ENCODE measurements at regions of chr10 and their contacts with region 1.

Region 1: GRCh38 chr10:61896854-61897661 is 4.4 kb upstream of the ARID5B start:
- DNase-seq: peak in 12 of 14 experiments; percentile 16 to 89 (median 36)
- ATAC-seq: peak; percentile 53
- H3K4me3 ChIP-seq: peak overlapping the region; percentile 48
- H3K4me3 Mint-ChIP-seq: peak overlapping the region; percentile 85
- H3K27ac ChIP-seq: no peak overlapping the region
- H3K27ac Mint-ChIP-seq: peak overlapping the region; percentile 72
- H3K4me1 ChIP-seq: peaks cover 19% of the 10 kb centered on the region
- H3K4me1 Mint-ChIP-seq: peaks cover 33% of the 10 kb centered on the region
- H3K27me3 ChIP-seq: no peaks in the 10 kb centered on the region
- H3K27me3 Mint-ChIP-seq: no peaks in the 10 kb centered on the region
- CTCF ChIP-seq: peak; percentile 75

Region 2: DNA sequence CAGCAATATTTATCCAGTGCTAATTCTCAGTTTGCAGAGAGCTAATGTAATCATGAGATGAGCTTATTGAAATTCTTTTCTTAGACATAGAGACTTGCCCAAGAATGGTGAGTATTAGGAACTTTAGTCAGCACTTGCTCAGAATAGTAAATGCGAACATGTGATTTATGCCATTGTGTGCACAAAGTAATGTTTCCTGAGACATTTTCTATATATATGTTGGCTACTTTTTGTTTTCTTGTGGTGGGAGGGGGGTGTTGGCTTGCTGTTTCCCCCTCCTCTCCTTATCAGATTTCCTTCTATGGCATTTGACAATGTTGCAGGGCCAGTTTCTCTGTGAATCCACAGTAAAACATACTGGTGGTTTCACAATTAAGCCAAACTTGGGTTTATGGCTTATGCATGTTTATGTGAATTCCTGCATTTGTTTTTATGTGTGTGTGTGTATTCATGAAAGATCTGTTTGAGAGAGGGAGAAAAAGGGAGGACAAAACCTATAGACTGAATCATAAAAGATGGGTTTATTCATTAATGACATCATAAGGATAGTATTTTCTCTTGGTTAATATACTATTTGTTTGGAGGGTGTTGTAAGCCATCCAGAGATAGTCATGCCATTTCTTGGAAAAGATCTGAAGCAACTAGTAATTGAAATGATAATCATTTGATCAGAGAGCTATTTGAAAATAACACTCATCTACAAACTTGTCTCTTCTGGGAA is 40.7 kb after region 1 on chr10:
- CTCF ChIA-PET with region 1: interaction called, 8 read pairs
- POLR2A ChIA-PET with region 1: interaction called, 28 read pairs
- intact Hi-C with region 1: no loop called
- DNase-seq: no peak
- ATAC-seq: no peak
- H3K4me3 ChIP-seq: no peak overlapping the region
- H3K4me3 Mint-ChIP-seq: no peak overlapping the region
- H3K27ac ChIP-seq: peak overlapping the region in 1 of 2 donors; percentile 46
- H3K27ac Mint-ChIP-seq: peak overlapping the region; percentile 82
- H3K4me1 ChIP-seq: peaks cover 40% of the 10 kb centered on the region
- H3K4me1 Mint-ChIP-seq: peaks cover 83% of the 10 kb centered on the region
- H3K27me3 ChIP-seq: no peaks in the 10 kb centered on the region
- H3K27me3 Mint-ChIP-seq: no peaks in the 10 kb centered on the region
- CTCF ChIP-seq: no peak

Region 3: DNA sequence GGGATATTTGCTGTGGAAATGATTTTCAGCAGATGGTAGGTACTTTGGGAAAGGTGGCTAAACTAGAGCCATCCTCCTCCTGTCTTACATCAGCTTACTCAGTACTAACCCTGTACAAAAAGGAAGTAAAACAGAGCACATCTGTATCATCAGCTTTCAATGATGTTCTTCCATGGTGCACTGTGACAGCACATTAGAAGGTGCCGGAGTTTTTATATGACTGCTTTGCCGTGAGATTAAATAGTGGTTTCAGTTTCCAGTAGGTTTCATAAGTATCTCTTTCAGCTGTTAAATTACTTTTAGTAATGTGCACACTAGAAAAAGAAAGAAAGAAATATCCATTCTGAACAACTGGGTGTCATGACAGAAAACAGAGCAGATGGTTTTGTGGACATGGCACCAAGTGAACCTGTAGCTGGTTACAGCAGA is 90.9 kb after region 1 on chr10:
- CTCF ChIA-PET with region 1: interaction called, 14 read pairs
- POLR2A ChIA-PET with region 1: interaction called, 51 read pairs
- intact Hi-C with region 1: loop called (anchors 1 to 5 kb)
- DNase-seq: peak in 3 of 14 experiments; percentile 61 to 70 (median 63)
- ATAC-seq: peak; percentile 59
- H3K4me3 ChIP-seq: peak overlapping the region; percentile 17
- H3K4me3 Mint-ChIP-seq: peak overlapping the region; percentile 18
- H3K27ac ChIP-seq: peak overlapping the region in 1 of 2 donors; percentile 47
- H3K27ac Mint-ChIP-seq: peak overlapping the region; percentile 78
- H3K4me1 ChIP-seq: peaks cover 24% of the 10 kb centered on the region
- H3K4me1 Mint-ChIP-seq: peaks cover 68% of the 10 kb centered on the region
- H3K27me3 ChIP-seq: no peaks in the 10 kb centered on the region
- H3K27me3 Mint-ChIP-seq: no peaks in the 10 kb centered on the region
- CTCF ChIP-seq: no peak

Region 4: DNA sequence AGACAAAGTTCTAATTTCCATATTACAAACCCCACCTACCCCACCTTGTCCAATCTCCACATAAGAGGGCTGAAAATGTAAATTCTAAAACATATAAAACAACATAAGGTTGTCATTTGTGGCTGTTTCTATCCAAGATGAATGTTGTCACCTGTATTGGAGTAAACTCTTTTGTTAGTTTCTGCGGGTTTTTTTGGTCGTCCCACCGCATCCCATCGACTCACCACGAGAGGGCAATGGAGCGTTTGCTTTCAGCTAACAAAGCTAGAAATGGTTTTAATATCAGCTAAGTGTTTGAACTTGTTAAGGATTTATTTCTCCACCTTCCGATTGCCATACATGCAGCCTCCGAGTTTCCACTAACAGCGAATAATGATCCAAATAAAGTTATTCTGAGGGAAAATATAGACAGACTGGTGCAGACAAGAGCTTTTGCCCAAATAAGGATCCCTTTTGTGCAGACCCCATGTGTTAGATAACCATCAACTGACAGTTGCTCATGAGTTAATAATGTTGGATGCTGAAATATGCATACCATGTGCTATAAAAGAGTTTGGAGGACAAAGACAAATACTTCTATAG is 141.6 kb after region 1 on chr10:
- CTCF ChIA-PET with region 1: interaction called, 20 read pairs
- POLR2A ChIA-PET with region 1: interaction called, 103 read pairs
- intact Hi-C with region 1: loop called (anchors 5 kb)
- DNase-seq: peak; percentile 65 to 88 (median 72)
- ATAC-seq: peak; percentile 84
- H3K4me3 ChIP-seq: peak overlapping the region; percentile 29
- H3K4me3 Mint-ChIP-seq: peak overlapping the region; percentile 72
- H3K27ac ChIP-seq: no peak overlapping the region
- H3K27ac Mint-ChIP-seq: peak overlapping the region; percentile 68
- H3K4me1 ChIP-seq: peaks cover 54% of the 10 kb centered on the region
- H3K4me1 Mint-ChIP-seq: peaks cover 87% of the 10 kb centered on the region
- H3K27me3 ChIP-seq: no peaks in the 10 kb centered on the region
- H3K27me3 Mint-ChIP-seq: no peaks in the 10 kb centered on the region
- CTCF ChIP-seq: peak; percentile 82

Region 5: GRCh38 chr10:62071846-62072281 is 174.8 kb after region 1 on chr10:
- CTCF ChIA-PET with region 1: no interaction called
- POLR2A ChIA-PET with region 1: no interaction called
- intact Hi-C with region 1: no loop called
- DNase-seq: no peak
- ATAC-seq: no peak
- H3K4me3 ChIP-seq: no peak overlapping the region
- H3K4me3 Mint-ChIP-seq: no peak overlapping the region
- H3K27ac ChIP-seq: no peak overlapping the region
- H3K27ac Mint-ChIP-seq: peak overlapping the region; percentile 68
- H3K4me1 ChIP-seq: peaks cover 24% of the 10 kb centered on the region
- H3K4me1 Mint-ChIP-seq: peaks cover 61% of the 10 kb centered on the region
- H3K27me3 ChIP-seq: no peaks in the 10 kb centered on the region
- H3K27me3 Mint-ChIP-seq: no peaks in the 10 kb centered on the region
- CTCF ChIP-seq: no peak

Region 6: GRCh38 chr10:62199584-62199983 is 302.5 kb after region 1 on chr10:
- CTCF ChIA-PET with region 1: interaction called, 4 read pairs
- POLR2A ChIA-PET with region 1: no interaction called
- intact Hi-C with region 1: loop called (anchors 5 kb)
- DNase-seq: peak in 3 of 14 experiments; percentile 46 to 58 (median 57)
- ATAC-seq: peak; percentile 75
- H3K4me3 ChIP-seq: no peak overlapping the region
- H3K4me3 Mint-ChIP-seq: no peak overlapping the region
- H3K27ac ChIP-seq: no peak overlapping the region
- H3K27ac Mint-ChIP-seq: peak overlapping the region; percentile 25
- H3K4me1 ChIP-seq: peaks cover 5% of the 10 kb centered on the region
- H3K4me1 Mint-ChIP-seq: peaks cover 39% of the 10 kb centered on the region
- H3K27me3 ChIP-seq: no peaks in the 10 kb centered on the region
- H3K27me3 Mint-ChIP-seq: no peaks in the 10 kb centered on the region
- CTCF ChIP-seq: no peak

Region 7: DNA sequence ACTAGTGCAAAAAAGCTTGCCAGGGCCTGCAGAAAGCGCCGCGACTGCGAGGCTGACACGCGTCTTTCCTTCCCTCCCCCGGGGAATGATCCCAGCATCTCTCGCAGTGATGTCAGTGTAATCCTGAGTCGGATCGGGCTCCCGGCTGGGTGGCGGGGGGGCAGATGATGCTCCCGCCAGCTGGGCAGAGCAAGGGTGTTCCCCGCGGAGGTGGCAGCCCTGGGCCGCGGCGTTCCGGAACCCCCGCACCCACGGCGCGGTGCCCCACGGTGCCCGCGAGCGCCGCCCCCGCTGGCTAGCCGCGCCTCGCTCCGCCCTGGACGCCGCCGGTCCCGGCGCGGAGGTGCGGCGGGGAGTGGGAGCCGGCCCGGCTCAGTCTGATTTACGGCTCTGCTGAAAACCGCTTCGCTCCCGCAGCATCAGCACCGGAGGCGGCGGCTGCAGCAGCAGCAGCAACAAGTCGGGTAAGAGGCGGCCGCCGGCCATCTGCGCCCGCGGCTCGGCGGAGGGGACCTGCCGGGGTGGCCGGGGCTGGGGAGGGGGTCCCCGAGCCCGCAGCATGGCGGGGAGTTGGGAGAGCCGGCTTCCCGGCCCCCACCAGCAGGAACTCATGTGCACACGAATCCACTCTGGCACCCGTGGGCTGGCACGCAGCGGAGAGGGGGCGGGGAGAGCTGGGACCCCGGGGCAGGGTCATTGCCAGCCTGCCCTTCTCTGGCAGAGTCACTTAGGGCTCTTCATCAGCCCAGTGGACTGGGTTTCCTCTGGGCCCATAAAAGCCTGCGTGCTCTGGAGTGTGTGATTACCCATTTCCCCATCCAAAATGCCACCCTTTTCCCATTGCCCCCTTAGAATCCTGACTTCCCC is 477.2 kb after region 1 on chr10 and contains the start of gene ZNF365:
- CTCF ChIA-PET with region 1: no interaction called
- POLR2A ChIA-PET with region 1: interaction called, 3 read pairs
- intact Hi-C with region 1: loop called in 1 of 2 experiments (anchors 10 kb)
- DNase-seq: peak in 13 of 14 experiments; percentile 8 to 80 (median 29)
- ATAC-seq: peak; percentile 80
- H3K4me3 ChIP-seq: peak within 1 kb of the TSS; percentile 61
- H3K4me3 Mint-ChIP-seq: peak within 1 kb of the TSS; percentile 90
- H3K27ac ChIP-seq: no peak within 1 kb of the TSS
- H3K27ac Mint-ChIP-seq: peak within 1 kb of the TSS; percentile 42
- H3K4me1 ChIP-seq: peaks cover 19% of the 10 kb centered on the region
- H3K4me1 Mint-ChIP-seq: peaks cover 17% of the 10 kb centered on the region
- H3K27me3 ChIP-seq: peaks cover 3 to 10% of the 10 kb centered on the region in 2 experiments
- H3K27me3 Mint-ChIP-seq: peaks cover 40% of the 10 kb centered on the region
- CTCF ChIP-seq: no peak
- total RNA-seq, gene ZNF365: 1.8 to 2.0 TPM

Region 8: DNA sequence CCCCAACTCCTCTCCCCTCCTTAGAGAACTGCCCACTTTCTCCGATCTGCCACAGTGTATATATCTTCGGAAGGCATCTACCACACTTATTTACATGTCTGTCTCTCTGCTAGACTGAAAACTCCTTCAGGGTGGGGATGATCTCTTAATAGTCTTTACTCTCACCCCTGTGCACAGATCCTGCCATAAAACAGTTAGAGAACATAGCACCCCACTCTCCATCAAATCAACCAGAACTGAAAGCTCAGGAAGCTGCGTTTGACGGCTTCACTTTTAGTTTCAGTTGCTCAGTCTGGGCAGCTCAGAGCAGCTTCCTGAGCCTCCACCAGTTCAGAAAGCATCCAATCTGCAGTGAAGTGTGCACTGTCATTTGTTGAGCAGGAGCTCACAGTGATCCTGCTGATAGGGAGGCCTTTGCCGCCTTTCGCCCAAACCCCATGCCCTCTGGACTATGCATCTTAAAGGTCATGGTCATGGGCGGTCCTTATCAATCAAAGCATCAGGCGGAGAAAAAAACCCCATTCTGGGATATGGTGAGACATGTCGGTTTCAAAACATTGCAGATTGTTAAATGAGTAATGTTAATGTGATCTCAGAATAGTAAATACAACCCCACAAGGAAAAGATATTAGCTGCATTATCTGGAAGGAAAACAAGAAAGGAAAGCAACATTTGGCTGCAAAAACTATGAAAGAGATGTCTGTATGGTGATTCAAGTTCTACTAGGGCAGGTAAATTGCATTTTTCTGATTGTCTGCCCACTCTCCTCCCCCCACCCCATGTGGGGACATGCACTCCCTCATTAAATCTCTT is 740.4 kb after region 1 on chr10:
- CTCF ChIA-PET with region 1: no interaction called
- POLR2A ChIA-PET with region 1: interaction called, 3 read pairs
- intact Hi-C with region 1: loop called in 1 of 2 experiments (anchors 10 kb)
- DNase-seq: peak; percentile 44 to 87 (median 52)
- ATAC-seq: peak; percentile 91
- H3K4me3 ChIP-seq: peak overlapping the region; percentile 49
- H3K4me3 Mint-ChIP-seq: no peak overlapping the region
- H3K27ac ChIP-seq: peak overlapping the region; percentile 70 to 78
- H3K27ac Mint-ChIP-seq: no peak overlapping the region
- H3K4me1 ChIP-seq: peaks cover 32% of the 10 kb centered on the region
- H3K4me1 Mint-ChIP-seq: peaks cover 4% of the 10 kb centered on the region
- H3K27me3 ChIP-seq: no peaks in the 10 kb centered on the region
- H3K27me3 Mint-ChIP-seq: no peaks in the 10 kb centered on the region
- CTCF ChIP-seq: no peak

Measured in CD4-positive, alpha-beta T cell (primary cell).